ENCODE measurements at regions of chr10 and their contacts with region 1.

Region 1: DNA sequence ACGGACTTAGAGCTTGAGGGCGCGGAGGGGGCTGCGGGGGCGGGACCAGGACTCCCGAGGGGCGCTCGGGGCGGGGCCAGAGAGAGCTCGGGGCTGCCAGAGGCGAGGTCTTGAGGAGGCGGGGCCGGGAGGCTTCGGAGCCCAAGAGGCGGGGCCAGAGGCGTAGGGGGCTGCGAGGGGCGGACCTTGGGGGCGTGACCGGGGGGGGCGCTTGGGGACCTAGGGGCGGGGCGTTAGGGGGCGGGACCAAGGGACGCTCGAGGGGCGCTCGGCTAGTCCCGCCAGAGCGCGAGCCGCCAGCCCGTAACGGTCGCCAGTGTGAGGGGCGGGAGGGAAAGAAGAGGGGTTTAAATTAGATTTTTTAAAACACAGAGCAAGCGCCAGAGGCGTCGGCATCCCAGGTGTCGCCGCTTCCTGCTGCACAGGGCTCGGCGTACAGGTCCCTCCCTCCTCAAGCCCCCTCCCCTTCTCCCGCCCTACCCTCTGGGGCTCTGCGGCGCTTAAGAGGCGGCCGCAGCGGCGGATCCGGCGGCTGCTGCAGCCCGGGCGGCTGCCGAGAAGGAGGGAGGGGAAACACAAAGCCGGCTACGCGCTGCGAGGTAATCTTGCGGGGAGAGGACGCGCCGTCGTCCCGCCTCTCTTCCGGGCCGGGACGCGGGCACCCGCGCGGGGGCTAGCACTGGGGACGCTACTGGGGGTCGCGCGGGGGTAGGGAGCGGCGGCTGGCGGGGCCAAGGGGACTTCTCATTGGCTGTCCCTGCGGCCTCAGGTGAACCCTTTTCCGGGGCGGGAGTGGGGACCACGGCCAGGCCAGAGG is at the start of gene ADD3:
- DNase-seq: peak; percentile 48
- ATAC-seq: peak; percentile 81
- H3K4me3 ChIP-seq: peak within 1 kb of the TSS; percentile 90
- H3K27ac ChIP-seq: peak within 1 kb of the TSS; percentile 56
- H3K4me1 ChIP-seq: peaks cover 27% of the 10 kb centered on the region
- H3K27me3 ChIP-seq: no peaks in the 10 kb centered on the region
- CTCF ChIP-seq: no peak
- EP300 ChIP-seq: no peak
- POLR2A ChIP-seq: peak; percentile 79
- RAD21 ChIP-seq: no peak
- polyA plus RNA-seq, gene ADD3: 27.3 to 28.5 TPM

Region 2: DNA sequence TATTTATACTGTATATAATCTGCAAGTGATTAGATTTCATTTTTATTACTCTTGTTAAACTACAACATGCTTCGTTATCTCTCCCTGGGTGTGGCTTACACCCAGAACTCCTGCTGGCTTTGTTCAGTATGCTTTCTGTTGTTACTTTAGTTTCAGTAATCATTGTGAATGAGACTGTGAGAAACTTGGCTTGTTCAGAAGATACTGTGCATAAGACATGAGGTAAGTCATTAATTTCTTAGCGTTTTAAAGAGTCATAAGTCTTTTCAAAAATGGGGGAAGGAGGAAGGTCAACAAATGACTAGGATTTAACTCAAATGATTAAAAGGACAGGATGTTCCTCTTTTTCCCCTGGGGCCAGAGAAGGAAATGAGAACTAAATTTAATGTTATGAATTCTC is 11.7 kb before region 1 on chr10:
- CTCF ChIA-PET with region 1: interaction called, 10 read pairs
- POLR2A ChIA-PET with region 1: interaction called, 3 read pairs
- RAD21 ChIA-PET with region 1: interaction called, 4 read pairs
- SMC1A ChIA-PET with region 1: interaction called, 13 read pairs
- in situ Hi-C with region 1: no loop called
- intact Hi-C with region 1: no loop called
- DNase-seq: no peak
- ATAC-seq: peak; percentile 87
- H3K4me3 ChIP-seq: no peak overlapping the region
- H3K27ac ChIP-seq: peak overlapping the region; percentile 32; the same call in 1 of the 2 replicates
- H3K4me1 ChIP-seq: peaks cover 14% of the 10 kb centered on the region
- H3K27me3 ChIP-seq: no peaks in the 10 kb centered on the region
- CTCF ChIP-seq: no peak
- EP300 ChIP-seq: no peak
- POLR2A ChIP-seq: no peak
- RAD21 ChIP-seq: no peak

Region 3: GRCh38 chr10:110036640-110037039 is 28.7 kb after region 1 on chr10:
- CTCF ChIA-PET with region 1: interaction called, 8 read pairs
- POLR2A ChIA-PET with region 1: interaction called, 3 read pairs
- RAD21 ChIA-PET with region 1: interaction called, 4 read pairs
- SMC1A ChIA-PET with region 1: interaction called, 15 read pairs
- in situ Hi-C with region 1: no loop called
- intact Hi-C with region 1: no loop called
- DNase-seq: peak; percentile 48
- ATAC-seq: peak; percentile 78
- H3K4me3 ChIP-seq: peak overlapping the region; percentile 20
- H3K27ac ChIP-seq: peak overlapping the region; percentile 42; the same call in 1 of the 2 replicates
- H3K4me1 ChIP-seq: peaks cover 16% of the 10 kb centered on the region
- H3K27me3 ChIP-seq: no peaks in the 10 kb centered on the region
- CTCF ChIP-seq: no peak
- EP300 ChIP-seq: 0 out of 4 replicates have a peak, but pooled peaks of 1 of the 2 experiments have one; percentile 17
- POLR2A ChIP-seq: no peak
- RAD21 ChIP-seq: no peak

Region 4: GRCh38 chr10:110076559-110077318 is 68.8 kb after region 1 on chr10:
- CTCF ChIA-PET with region 1: interaction called, 3 read pairs
- POLR2A ChIA-PET with region 1: interaction called, 5 read pairs
- RAD21 ChIA-PET with region 1: interaction called, 60 read pairs
- SMC1A ChIA-PET with region 1: interaction called, 43 read pairs
- in situ Hi-C with region 1: no loop called
- intact Hi-C with region 1: loop called (anchors 2 kb)
- DNase-seq: peak; percentile 76
- ATAC-seq: peak; percentile 83
- H3K4me3 ChIP-seq: peak overlapping the region; percentile 43
- H3K27ac ChIP-seq: peak overlapping the region; percentile 87
- H3K4me1 ChIP-seq: peaks cover 34% of the 10 kb centered on the region
- H3K27me3 ChIP-seq: no peaks in the 10 kb centered on the region
- CTCF ChIP-seq: no peak
- EP300 ChIP-seq: peak; percentile 26 to 46; a peak in 1 of 4 replicates
- POLR2A ChIP-seq: no peak
- RAD21 ChIP-seq: peak; percentile 11; the same call in 1 of the 2 replicates

Region 5: GRCh38 chr10:110144507-110144906 is 136.6 kb after region 1 on chr10:
- CTCF ChIA-PET with region 1: no interaction called
- POLR2A ChIA-PET with region 1: no interaction called
- RAD21 ChIA-PET with region 1: no interaction called
- SMC1A ChIA-PET with region 1: no interaction called
- in situ Hi-C with region 1: no loop called
- intact Hi-C with region 1: no loop called
- DNase-seq: no peak
- ATAC-seq: no peak
- H3K4me3 ChIP-seq: no peak overlapping the region
- H3K27ac ChIP-seq: no peak overlapping the region
- H3K4me1 ChIP-seq: no peaks in the 10 kb centered on the region
- H3K27me3 ChIP-seq: peaks cover 0 to 1% of the 10 kb centered on the region in 2 experiments; a peak in 3 of 4 replicates
- CTCF ChIP-seq: no peak
- EP300 ChIP-seq: no peak
- POLR2A ChIP-seq: no peak
- RAD21 ChIP-seq: no peak